Calu3 (cell line): ENCODE measurements at regions of chr3 and their contacts with region 1.

Region 1: GRCh38 chr3:66490214-66490613 is 10.6 kb downstream of the LRIG1 start:
- DNase-seq: no peak
- H3K4me3 Mint-ChIP-seq: no peak overlapping the region
- H3K27ac Mint-ChIP-seq: no peak overlapping the region
- H3K4me1 Mint-ChIP-seq: peaks cover 35% of the 10 kb centered on the region
- H3K27me3 Mint-ChIP-seq: no peaks in the 10 kb centered on the region
- CTCF ChIP-seq: no peak

Region 2: DNA sequence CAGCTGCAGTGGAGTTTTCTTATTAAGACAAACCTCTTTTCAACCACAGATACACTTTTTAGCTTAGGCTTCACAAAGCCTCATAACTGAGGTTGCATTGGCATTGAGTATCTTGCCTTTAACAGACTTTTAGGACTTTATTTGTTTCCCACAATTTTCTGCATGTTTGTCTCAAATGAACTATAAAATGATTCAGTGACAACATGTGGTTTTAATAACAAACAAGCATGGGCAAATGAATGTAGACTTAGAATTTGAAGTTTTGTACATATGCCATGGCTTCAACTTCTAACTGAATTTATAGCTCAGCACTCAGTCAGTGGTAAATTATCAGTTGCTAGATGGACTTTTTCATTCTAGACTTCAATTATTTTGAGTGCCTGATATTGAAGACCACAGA is 167.8 kb before region 1 on chr3:
- CTCF ChIA-PET with region 1: no interaction called
- intact Hi-C with region 1: no loop called
- DNase-seq: no peak
- H3K4me3 Mint-ChIP-seq: no peak overlapping the region
- H3K27ac Mint-ChIP-seq: no peak overlapping the region
- H3K4me1 Mint-ChIP-seq: peaks cover 13% of the 10 kb centered on the region
- H3K27me3 Mint-ChIP-seq: no peaks in the 10 kb centered on the region
- CTCF ChIP-seq: no peak

Region 3: GRCh38 chr3:66407611-66408218 is 82.5 kb before region 1 on chr3:
- CTCF ChIA-PET with region 1: no interaction called
- intact Hi-C with region 1: loop called (anchors 5 kb)
- DNase-seq: peak; percentile 81
- H3K4me3 Mint-ChIP-seq: no peak overlapping the region
- H3K27ac Mint-ChIP-seq: no peak overlapping the region
- H3K4me1 Mint-ChIP-seq: no peaks in the 10 kb centered on the region
- H3K27me3 Mint-ChIP-seq: no peaks in the 10 kb centered on the region
- CTCF ChIP-seq: peak; percentile 83

Region 4: GRCh38 chr3:66418475-66418931 is 71.7 kb before region 1 on chr3:
- CTCF ChIA-PET with region 1: no interaction called
- intact Hi-C with region 1: no loop called
- DNase-seq: no peak
- H3K4me3 Mint-ChIP-seq: no peak overlapping the region
- H3K27ac Mint-ChIP-seq: no peak overlapping the region
- H3K4me1 Mint-ChIP-seq: no peaks in the 10 kb centered on the region
- H3K27me3 Mint-ChIP-seq: no peaks in the 10 kb centered on the region
- CTCF ChIP-seq: no peak

Region 5: GRCh38 chr3:66464512-66464894 is 25.7 kb before region 1 on chr3:
- CTCF ChIA-PET with region 1: no interaction called
- intact Hi-C with region 1: no loop called
- DNase-seq: no peak
- H3K4me3 Mint-ChIP-seq: no peak overlapping the region
- H3K27ac Mint-ChIP-seq: no peak overlapping the region
- H3K4me1 Mint-ChIP-seq: no peaks in the 10 kb centered on the region
- H3K27me3 Mint-ChIP-seq: no peaks in the 10 kb centered on the region
- CTCF ChIP-seq: no peak